Activated CD4-positive, alpha-beta T cell treated with anti-CD3 and anti-CD28 coated beads for 36 hours (primary cell): ENCODE measurements at regions of chr12 and their contacts with region 1.

Region 1: GRCh38 chr12:113184900-113185773 is at the starts of genes DDX54 and RITA1:
- DNase-seq: peak; percentile 94
- ATAC-seq: peak; percentile 89
- H3K4me3 Mint-ChIP-seq: peak within 1 kb of the TSS; percentile 97
- H3K27ac Mint-ChIP-seq: peak within 1 kb of the TSS; percentile 96
- H3K4me1 Mint-ChIP-seq: peaks cover 36% of the 10 kb centered on the region
- H3K27me3 Mint-ChIP-seq: no peaks in the 10 kb centered on the region
- total RNA-seq, gene DDX54: 118 to 132 TPM
- total RNA-seq, gene RITA1: 23.4 to 25.7 TPM

Region 2: GRCh38 chr12:112870267-112870980 is 314.7 kb before region 1 on chr12:
- CTCF ChIA-PET with region 1: no interaction called
- POLR2A ChIA-PET with region 1: no interaction called
- intact Hi-C with region 1: no loop called
- DNase-seq: no peak
- ATAC-seq: no peak
- H3K4me3 Mint-ChIP-seq: no peak overlapping the region
- H3K27ac Mint-ChIP-seq: no peak overlapping the region
- H3K4me1 Mint-ChIP-seq: no peaks in the 10 kb centered on the region
- H3K27me3 Mint-ChIP-seq: peaks cover 28% of the 10 kb centered on the region

Region 3: DNA sequence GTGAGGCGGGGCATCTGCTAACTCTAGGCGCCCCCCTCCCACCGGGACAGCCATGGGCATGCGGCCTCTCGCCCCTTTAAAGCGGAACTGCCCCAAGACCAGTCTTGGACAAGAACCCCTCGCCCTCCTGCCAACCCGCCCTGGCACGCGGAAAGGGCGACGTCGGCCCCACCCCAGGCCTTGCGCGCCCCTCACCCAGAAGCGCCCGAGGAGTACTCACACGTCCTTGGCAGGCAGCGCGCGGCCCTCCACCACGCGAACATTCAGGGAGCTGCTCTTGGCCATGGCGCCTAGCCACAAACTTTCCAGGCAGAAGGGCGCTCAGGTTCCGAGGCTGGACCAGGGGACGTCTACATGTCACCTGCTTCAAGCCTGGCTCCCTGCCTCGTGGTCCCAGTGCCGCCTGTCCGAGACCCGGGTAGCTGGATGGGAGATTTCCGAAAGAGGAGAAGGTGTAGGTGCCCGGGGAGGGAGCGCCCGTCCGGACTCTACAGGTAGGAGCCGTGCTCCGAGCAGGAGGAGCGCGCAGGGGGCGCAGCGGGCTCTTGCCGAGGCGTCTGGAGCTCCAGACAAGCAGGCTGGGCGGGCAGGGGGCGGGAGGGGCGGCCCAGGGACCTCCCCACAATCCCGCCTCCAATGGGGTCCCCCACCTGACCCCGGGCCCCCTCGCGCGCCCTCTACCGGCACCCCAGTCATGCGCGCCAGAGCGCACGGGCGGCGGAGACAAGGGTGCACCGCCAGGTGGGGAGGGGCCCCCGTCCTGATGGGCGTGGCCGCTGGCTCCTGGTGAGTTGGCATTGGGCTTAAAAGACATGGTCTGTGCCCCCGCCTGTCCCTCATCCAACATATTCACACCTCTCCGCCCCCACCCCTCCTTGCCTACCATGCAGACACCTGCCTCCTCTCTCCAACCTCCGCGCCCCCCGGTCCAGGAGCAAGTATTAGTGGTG is 49.7 kb before region 1 on chr12 and contains the start of gene RASAL1:
- CTCF ChIA-PET with region 1: interaction called, 3 read pairs
- POLR2A ChIA-PET with region 1: interaction called, 4 read pairs
- intact Hi-C with region 1: loop called in 1 of 2 experiments (anchors 1 kb)
- DNase-seq: peak; percentile 96
- ATAC-seq: peak; percentile 92
- H3K4me3 Mint-ChIP-seq: peak within 1 kb of the TSS; percentile 73
- H3K27ac Mint-ChIP-seq: peak within 1 kb of the TSS; percentile 92
- H3K4me1 Mint-ChIP-seq: peaks cover 16% of the 10 kb centered on the region
- H3K27me3 Mint-ChIP-seq: no peaks in the 10 kb centered on the region
- total RNA-seq, gene RASAL1: 9.0 to 10.6 TPM

Region 4: GRCh38 chr12:113174461-113175384 is 10.4 kb before region 1 on chr12:
- CTCF ChIA-PET with region 1: interaction called, 29 read pairs
- POLR2A ChIA-PET with region 1: interaction called, 5 read pairs
- intact Hi-C with region 1: no loop called
- DNase-seq: peak; percentile 88
- ATAC-seq: peak; percentile 75
- H3K4me3 Mint-ChIP-seq: no peak overlapping the region
- H3K27ac Mint-ChIP-seq: no peak overlapping the region
- H3K4me1 Mint-ChIP-seq: peaks cover 2% of the 10 kb centered on the region
- H3K27me3 Mint-ChIP-seq: no peaks in the 10 kb centered on the region

Region 5: DNA sequence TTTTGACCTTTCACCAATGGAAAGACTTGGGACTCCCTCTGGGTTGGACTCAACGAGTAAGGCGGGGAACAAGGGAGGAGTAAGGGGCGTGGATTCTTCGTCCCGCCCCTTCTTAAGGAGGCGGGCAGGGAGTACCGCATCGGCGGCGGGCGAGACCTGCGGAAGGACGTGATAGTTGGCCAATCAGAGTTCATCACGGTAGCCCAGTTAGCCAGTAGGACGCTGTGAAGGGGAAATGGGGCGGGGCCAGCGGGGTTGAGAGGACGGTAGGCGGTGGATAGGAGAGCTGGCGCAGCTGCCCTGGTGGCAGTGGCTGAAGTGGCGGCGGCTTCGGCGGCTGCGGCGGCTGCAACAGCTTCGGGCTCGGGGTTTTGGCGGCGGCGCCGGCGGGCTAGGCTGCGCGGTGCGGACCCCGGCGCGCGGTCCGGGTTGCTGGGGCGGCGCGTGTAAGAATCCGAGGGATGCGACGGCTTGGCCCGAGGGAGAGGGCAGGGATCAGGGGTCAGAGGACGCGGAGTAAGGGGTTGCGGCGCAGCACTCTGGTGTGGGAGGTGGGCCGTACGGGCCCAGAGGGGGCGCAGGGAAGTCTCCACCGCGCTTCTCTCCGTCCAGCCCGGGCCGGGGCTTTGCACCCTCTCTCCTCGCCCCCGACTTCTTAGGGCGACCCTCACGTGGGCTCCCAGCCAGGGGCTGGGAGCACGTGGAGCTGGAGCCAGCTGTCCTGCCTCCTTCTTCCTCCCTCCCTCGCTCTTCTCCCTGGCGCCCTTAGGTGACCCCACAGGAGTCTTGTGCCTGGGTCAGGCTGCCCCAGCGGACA is 36.3 kb after region 1 on chr12 and contains the start of gene TPCN1:
- CTCF ChIA-PET with region 1: interaction called, 6 read pairs
- POLR2A ChIA-PET with region 1: interaction called, 5 read pairs
- intact Hi-C with region 1: loop called (anchors 1 kb)
- DNase-seq: peak; percentile 100
- ATAC-seq: peak; percentile 95
- H3K4me3 Mint-ChIP-seq: peak within 1 kb of the TSS; percentile 94
- H3K27ac Mint-ChIP-seq: peak within 1 kb of the TSS; percentile 91
- H3K4me1 Mint-ChIP-seq: peaks cover 34% of the 10 kb centered on the region
- H3K27me3 Mint-ChIP-seq: no peaks in the 10 kb centered on the region
- total RNA-seq, gene TPCN1: 35.5 to 37.0 TPM

Region 6: GRCh38 chr12:113334786-113335540 is 149.8 kb after region 1 on chr12 and contains the start of gene SLC8B1:
- CTCF ChIA-PET with region 1: no interaction called
- POLR2A ChIA-PET with region 1: no interaction called
- intact Hi-C with region 1: loop called (anchors 1 to 10 kb)
- DNase-seq: peak; percentile 92
- ATAC-seq: peak; percentile 98
- H3K4me3 Mint-ChIP-seq: peak within 1 kb of the TSS; percentile 89
- H3K27ac Mint-ChIP-seq: peak within 1 kb of the TSS; percentile 76
- H3K4me1 Mint-ChIP-seq: peaks cover 17% of the 10 kb centered on the region
- H3K27me3 Mint-ChIP-seq: no peaks in the 10 kb centered on the region
- total RNA-seq, gene SLC8B1: 17.9 to 19.4 TPM

Region 7: GRCh38 chr12:113422030-113422885 is 237.1 kb after region 1 on chr12 and contains the start of gene SDSL:
- CTCF ChIA-PET with region 1: no interaction called
- POLR2A ChIA-PET with region 1: no interaction called
- intact Hi-C with region 1: loop called in 1 of 2 experiments (anchors 1 kb)
- DNase-seq: peak; percentile 82
- ATAC-seq: peak; percentile 99
- H3K4me3 Mint-ChIP-seq: peak within 1 kb of the TSS; percentile 83
- H3K27ac Mint-ChIP-seq: peak within 1 kb of the TSS; percentile 96
- H3K4me1 Mint-ChIP-seq: peaks cover 11% of the 10 kb centered on the region
- H3K27me3 Mint-ChIP-seq: no peaks in the 10 kb centered on the region
- total RNA-seq, gene SDSL: 1.5 to 3.9 TPM

Region 8: GRCh38 chr12:113794774-113795173 is 609.6 kb after region 1 on chr12:
- CTCF ChIA-PET with region 1: no interaction called
- POLR2A ChIA-PET with region 1: no interaction called
- intact Hi-C with region 1: no loop called
- DNase-seq: no peak
- ATAC-seq: no peak
- H3K4me3 Mint-ChIP-seq: no peak overlapping the region
- H3K27ac Mint-ChIP-seq: no peak overlapping the region
- H3K4me1 Mint-ChIP-seq: no peaks in the 10 kb centered on the region
- H3K27me3 Mint-ChIP-seq: no peaks in the 10 kb centered on the region